Activated T-helper 2 cell treated with anti-CD3 and anti-CD28 coated beads, Interferon-gamma antibody, Interleukin-2, Interleukin-4, amounts not matched to agents 10 μg/mL and 5 μg/mL and 100 μg/mL, durations not matched to agents 14 hours and 24 hours and 36 hours (primary cell): ENCODE measurements at regions of chr10 and their contacts with region 1.

Region 1: DNA sequence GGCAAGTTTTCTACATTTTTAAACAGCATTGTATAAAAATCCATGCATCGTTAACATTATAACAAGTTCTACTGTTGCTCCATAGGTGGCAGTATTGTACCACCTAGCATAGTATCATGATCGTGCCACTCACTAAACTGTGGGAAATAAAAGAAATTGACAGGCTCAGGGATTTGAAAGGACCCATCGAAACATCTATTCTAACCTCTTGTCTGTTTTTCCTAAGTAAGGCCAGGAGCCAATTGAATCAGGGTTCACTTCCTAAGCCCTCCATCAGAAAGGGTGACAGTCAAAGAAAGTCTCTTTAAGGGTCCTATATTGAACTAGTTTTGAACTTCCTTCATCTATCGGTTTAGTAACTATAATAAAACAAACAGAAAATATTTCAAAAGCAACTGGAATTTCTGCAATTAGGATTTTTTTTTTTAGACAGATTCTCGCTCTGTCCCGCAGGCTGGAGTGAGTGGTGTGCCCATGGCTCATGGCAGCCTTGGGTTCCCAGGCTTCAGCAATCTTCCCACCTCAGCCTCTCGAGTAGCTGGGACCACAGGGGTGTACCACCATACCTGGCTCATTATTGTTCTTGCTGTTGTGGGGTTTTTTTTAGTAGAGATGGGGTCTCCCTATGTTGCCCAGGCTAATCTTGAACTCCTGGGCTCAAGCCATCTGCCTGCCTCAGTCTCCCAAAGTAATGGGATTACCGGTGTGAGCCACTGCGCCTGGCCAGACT is 9.4 kb downstream of the HACD1 start:
- DNase-seq: no peak
- H3K4me3 Mint-ChIP-seq: no peak overlapping the region
- H3K27ac Mint-ChIP-seq: no peak overlapping the region
- H3K4me1 Mint-ChIP-seq: peaks cover 2% of the 10 kb centered on the region
- H3K27me3 Mint-ChIP-seq: peaks cover 5% of the 10 kb centered on the region

Region 2: GRCh38 chr10:17742918-17743317 is 135.2 kb after region 1 on chr10:
- intact Hi-C with region 1: loop called (anchors 1 kb)
- DNase-seq: peak; percentile 49
- H3K4me3 Mint-ChIP-seq: no peak overlapping the region
- H3K27ac Mint-ChIP-seq: no peak overlapping the region
- H3K4me1 Mint-ChIP-seq: peaks cover 15% of the 10 kb centered on the region
- H3K27me3 Mint-ChIP-seq: no peaks in the 10 kb centered on the region

Region 3: GRCh38 chr10:17872191-17873091 is 264.7 kb after region 1 on chr10:
- intact Hi-C with region 1: loop called (anchors 1 kb)
- DNase-seq: no peak
- H3K4me3 Mint-ChIP-seq: no peak overlapping the region
- H3K27ac Mint-ChIP-seq: no peak overlapping the region
- H3K4me1 Mint-ChIP-seq: no peaks in the 10 kb centered on the region
- H3K27me3 Mint-ChIP-seq: no peaks in the 10 kb centered on the region

Region 4: DNA sequence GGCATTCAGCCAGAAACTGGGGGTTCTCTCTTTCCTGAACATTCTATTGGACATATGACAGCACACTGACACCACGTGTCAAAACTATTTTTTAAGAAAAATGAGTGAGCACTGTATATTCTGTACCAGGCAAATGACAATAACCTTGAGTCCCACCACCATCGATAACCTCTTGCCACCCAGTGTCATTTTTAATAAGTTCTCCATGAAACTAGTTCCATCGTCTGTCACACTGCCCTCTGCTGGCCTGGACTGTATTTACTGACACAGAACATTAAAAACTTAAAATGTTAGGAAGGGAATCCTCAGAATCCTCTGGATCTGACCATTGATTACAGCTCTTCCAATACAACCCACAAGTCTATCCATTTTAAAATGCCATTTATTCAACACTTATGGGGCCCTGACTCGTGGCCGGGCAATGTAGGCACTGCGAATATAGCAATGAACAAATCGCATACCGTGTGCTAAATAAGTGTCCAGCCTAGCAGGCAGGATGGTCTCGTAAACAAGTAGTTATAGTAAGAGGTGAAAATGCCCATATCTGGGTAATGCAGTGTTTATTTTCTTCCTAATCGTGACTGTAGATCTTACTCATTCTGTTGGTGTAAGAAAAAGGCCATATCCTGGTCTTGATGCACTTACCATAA is 496.6 kb after region 1 on chr10:
- intact Hi-C with region 1: loop called (anchors 1 kb)
- DNase-seq: peak; percentile 8
- H3K4me3 Mint-ChIP-seq: no peak overlapping the region
- H3K27ac Mint-ChIP-seq: no peak overlapping the region
- H3K4me1 Mint-ChIP-seq: no peaks in the 10 kb centered on the region
- H3K27me3 Mint-ChIP-seq: no peaks in the 10 kb centered on the region